ENCODE measurements at regions of chr2 and their contacts with region 1.

Region 1: GRCh38 chr2:217713395-217714286 is 289.2 kb downstream of the TNS1 start:
- DNase-seq: peak; percentile 42 to 77 (median 66)
- ATAC-seq: peak; percentile 84
- H3K4me3 ChIP-seq: no peak overlapping the region
- H3K4me3 Mint-ChIP-seq: no peak overlapping the region
- H3K27ac ChIP-seq: no peak overlapping the region
- H3K27ac Mint-ChIP-seq: no peak overlapping the region
- H3K4me1 ChIP-seq: peaks cover 0 to 3% of the 10 kb centered on the region in 2 donors
- H3K4me1 Mint-ChIP-seq: peaks cover 0 to 13% (median 5%) of the 10 kb centered on the region in 7 donors
- H3K27me3 ChIP-seq: no peaks in the 10 kb centered on the region
- H3K27me3 Mint-ChIP-seq: peaks cover 0 to 7% (median 4%) of the 10 kb centered on the region in 5 donors

Region 2: GRCh38 chr2:216519154-216519762 is 1194.4 kb before region 1 on chr2:
- CTCF ChIA-PET with region 1: no interaction called
- POLR2A ChIA-PET with region 1: no interaction called
- intact Hi-C with region 1: loop called (anchors 1 to 5 kb)
- DNase-seq: peak in 8 of 9 donors; percentile 15 to 52 (median 39)
- ATAC-seq: peak; percentile 65
- H3K4me3 ChIP-seq: no peak overlapping the region
- H3K4me3 Mint-ChIP-seq: no peak overlapping the region
- H3K27ac ChIP-seq: no peak overlapping the region
- H3K27ac Mint-ChIP-seq: no peak overlapping the region
- H3K4me1 ChIP-seq: no peaks in the 10 kb centered on the region
- H3K4me1 Mint-ChIP-seq: peaks cover 0 to 4% (median 0%) of the 10 kb centered on the region in 7 donors
- H3K27me3 ChIP-seq: no peaks in the 10 kb centered on the region
- H3K27me3 Mint-ChIP-seq: no peaks in the 10 kb centered on the region

Region 3: DNA sequence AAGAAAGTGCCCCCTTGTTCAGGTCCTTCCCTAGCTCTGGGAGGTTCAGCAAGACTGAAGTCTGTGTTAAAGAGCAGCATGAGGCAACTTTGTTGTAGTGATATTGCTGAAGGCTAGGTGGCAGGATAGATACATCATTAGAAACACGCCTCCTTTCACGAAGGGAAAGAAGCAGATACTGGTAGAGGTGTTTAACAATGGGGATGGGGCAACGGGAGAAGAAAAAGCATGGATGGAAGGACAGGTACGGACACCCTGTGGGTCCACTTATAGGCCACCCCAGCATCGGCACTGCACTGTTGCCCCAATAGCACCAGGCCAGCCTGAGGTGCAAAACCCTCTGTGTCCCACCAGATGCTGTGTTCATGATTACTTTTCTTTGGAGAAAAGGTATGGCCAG is 1014.7 kb before region 1 on chr2:
- CTCF ChIA-PET with region 1: interaction called, 4 read pairs
- POLR2A ChIA-PET with region 1: no interaction called
- intact Hi-C with region 1: loop called (anchors 1 kb)
- DNase-seq: peak in 5 of 9 donors; percentile 19 to 40 (median 26)
- ATAC-seq: peak; percentile 40
- H3K4me3 ChIP-seq: no peak overlapping the region
- H3K4me3 Mint-ChIP-seq: no peak overlapping the region
- H3K27ac ChIP-seq: no peak overlapping the region
- H3K27ac Mint-ChIP-seq: no peak overlapping the region
- H3K4me1 ChIP-seq: peaks cover 0 to 7% of the 10 kb centered on the region in 2 donors
- H3K4me1 Mint-ChIP-seq: peaks cover 0 to 21% (median 12%) of the 10 kb centered on the region in 7 donors
- H3K27me3 ChIP-seq: peaks cover 3 to 4% of the 10 kb centered on the region in 2 donors
- H3K27me3 Mint-ChIP-seq: peaks cover 5 to 37% (median 30%) of the 10 kb centered on the region in 5 donors

Region 4: DNA sequence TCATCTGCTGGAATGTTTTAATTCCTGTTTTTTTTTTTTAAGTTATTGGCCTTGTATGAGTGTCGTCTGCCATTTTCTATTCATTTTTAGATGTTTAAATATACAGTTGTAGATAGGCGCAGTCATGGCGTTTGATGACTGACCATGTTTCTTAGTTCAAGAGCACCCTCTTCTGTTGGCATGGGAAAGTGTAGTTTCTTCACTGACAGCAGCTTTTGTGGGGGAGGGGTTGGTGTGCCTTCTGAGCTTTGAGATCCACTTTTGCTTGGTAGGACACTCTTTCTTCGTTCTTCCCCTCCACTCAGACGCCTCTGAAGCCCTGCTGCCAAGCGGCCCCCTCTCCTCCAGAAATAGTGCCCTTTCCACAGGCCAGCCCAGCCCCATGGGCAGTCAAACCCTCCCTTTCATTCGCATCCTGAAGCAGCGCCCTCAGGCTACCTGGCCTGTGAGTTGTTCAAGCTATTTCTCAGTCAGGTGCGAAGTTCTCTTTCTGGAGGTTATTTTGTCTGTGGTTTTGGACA is 202.8 kb before region 1 on chr2:
- CTCF ChIA-PET with region 1: no interaction called
- POLR2A ChIA-PET with region 1: no interaction called
- intact Hi-C with region 1: loop called (anchors 1 to 5 kb)
- DNase-seq: peak in 8 of 9 donors; percentile 11 to 59 (median 40)
- ATAC-seq: peak; percentile 82
- H3K4me3 ChIP-seq: no peak overlapping the region
- H3K4me3 Mint-ChIP-seq: peak overlapping the region in 2 of 10 donors; percentile 14 to 20
- H3K27ac ChIP-seq: no peak overlapping the region
- H3K27ac Mint-ChIP-seq: no peak overlapping the region
- H3K4me1 ChIP-seq: no peaks in the 10 kb centered on the region
- H3K4me1 Mint-ChIP-seq: peaks cover 0 to 13% (median 7%) of the 10 kb centered on the region in 7 donors
- H3K27me3 ChIP-seq: no peaks in the 10 kb centered on the region
- H3K27me3 Mint-ChIP-seq: peaks cover 4 to 19% (median 7%) of the 10 kb centered on the region in 5 donors

Region 5: DNA sequence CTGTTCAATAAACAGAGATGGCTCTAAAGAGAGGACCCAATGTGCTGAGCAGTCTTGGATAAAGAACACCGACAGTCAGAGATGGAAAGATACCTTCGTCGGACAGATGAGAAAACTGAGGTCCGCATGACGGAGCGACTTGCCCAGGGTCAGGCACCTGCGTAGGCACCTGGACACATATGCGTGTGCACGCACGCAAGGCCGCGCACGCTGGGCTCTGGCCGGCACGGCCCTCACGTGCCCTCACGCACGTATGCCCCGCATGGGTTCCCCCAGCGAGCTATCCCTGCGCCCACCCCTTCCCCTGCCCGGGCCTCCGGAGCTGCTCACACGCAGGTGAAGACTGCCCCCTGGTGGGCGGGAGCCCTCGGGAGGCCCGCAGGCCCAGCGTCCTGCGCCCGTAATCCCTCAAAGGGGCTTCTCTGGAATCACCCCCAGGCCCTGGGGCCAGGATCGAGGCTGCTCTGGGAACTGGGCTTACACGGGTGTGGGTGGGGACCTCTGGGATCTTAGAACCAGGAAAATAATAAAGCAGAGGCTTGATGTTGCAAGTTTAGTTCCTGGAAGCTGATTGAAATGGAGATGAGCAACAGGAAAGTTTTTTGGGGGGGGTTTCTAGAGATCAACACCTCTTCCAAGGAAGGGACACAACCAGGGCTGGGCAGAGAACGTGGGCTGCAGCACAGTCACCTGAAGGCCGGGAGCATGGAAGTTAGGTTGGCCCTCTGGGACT is 42.9 kb after region 1 on chr2:
- CTCF ChIA-PET with region 1: interaction called, 3 read pairs
- POLR2A ChIA-PET with region 1: no interaction called
- intact Hi-C with region 1: loop called in 1 of 2 experiments (anchors 1 kb)
- DNase-seq: peak; percentile 48 to 76 (median 69)
- ATAC-seq: peak; percentile 91
- H3K4me3 ChIP-seq: peak overlapping the region; percentile 51
- H3K4me3 Mint-ChIP-seq: peak overlapping the region; percentile 9 to 73 (median 62)
- H3K27ac ChIP-seq: no peak overlapping the region
- H3K27ac Mint-ChIP-seq: peak overlapping the region in 1 of 9 donors; percentile 51
- H3K4me1 ChIP-seq: peaks cover 0 to 26% of the 10 kb centered on the region in 2 donors
- H3K4me1 Mint-ChIP-seq: peaks cover 18 to 36% (median 25%) of the 10 kb centered on the region in 7 donors
- H3K27me3 ChIP-seq: no peaks in the 10 kb centered on the region
- H3K27me3 Mint-ChIP-seq: peaks cover 0 to 11% (median 0%) of the 10 kb centered on the region in 5 donors